ENCODE measurements at regions of chr1 and their contacts with region 1.

Region 1: GRCh38 chr1:150259758-150260669 is 2.4 kb downstream of the CA14 start:
- DNase-seq: no peak
- H3K4me3 ChIP-seq: no peak overlapping the region
- H3K27ac ChIP-seq: no peak overlapping the region
- H3K4me1 ChIP-seq: peaks cover 4 to 21% (median 11%) of the 10 kb centered on the region in 4 experiments
- H3K27me3 ChIP-seq: peaks cover 5 to 44% (median 25%) of the 10 kb centered on the region in 5 experiments

Region 2: GRCh38 chr1:150288382-150288781 is 28.4 kb after region 1 on chr1:
- CTCF ChIA-PET with region 1: interaction called, 246 read pairs
- POLR2A ChIA-PET with region 1: no interaction called
- DNase-seq: no peak
- H3K4me3 ChIP-seq: no peak overlapping the region
- H3K27ac ChIP-seq: no peak overlapping the region
- H3K4me1 ChIP-seq: peaks cover 0 to 6% (median 6%) of the 10 kb centered on the region in 4 experiments
- H3K27me3 ChIP-seq: peaks cover 0 to 2% (median 0%) of the 10 kb centered on the region in 5 experiments

Measured in common myeloid progenitor, CD34-positive (primary cell).